Lower leg skin (tissue), 4 donors: ENCODE measurements at regions of chr6 and their contacts with region 1.

Region 1: DNA sequence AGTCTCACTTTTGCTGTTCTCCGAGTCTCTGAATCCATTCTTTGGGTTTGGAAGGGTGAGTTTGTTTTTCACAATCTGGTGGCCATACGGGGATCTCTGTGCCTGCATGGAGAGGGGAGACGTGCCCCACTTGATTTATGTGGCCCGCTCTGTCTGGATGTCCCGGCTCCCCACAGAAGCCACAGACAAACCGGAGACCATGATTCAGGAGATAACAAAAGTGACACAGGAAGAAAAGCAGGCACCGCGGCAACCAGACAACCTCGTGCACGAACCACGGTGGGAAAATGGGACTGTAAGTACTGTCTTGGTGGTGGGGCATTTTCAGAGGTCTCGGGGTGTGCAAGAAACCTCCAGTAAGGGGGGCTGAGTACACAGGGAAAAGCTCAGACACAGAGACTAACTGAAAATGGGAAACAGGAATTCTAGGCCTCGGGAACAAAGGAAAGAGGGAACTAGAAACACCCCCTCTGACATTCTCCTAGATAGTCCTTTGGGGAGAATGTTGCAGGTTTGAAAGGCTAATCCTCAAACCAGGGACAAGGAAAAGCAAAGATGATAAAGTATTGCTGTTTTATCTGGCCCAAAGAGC is 22.1 kb upstream of the ZNF318 start:
- DNase-seq: no peak
- H3K4me3 ChIP-seq: no peak overlapping the region
- CTCF ChIP-seq: no peak
- POLR2A ChIP-seq: no peak

Region 2: GRCh38 chr6:43263314-43264178 is 128.0 kb before region 1 on chr6:
- intact Hi-C with region 1: loop called (anchors 10 kb)
- DNase-seq: peak; percentile 48 to 92
- H3K4me3 ChIP-seq: no peak overlapping the region
- CTCF ChIP-seq: no peak
- POLR2A ChIP-seq: no peak

Region 3: GRCh38 chr6:43547222-43547621 is 155.7 kb after region 1 on chr6:
- intact Hi-C with region 1: no loop called
- DNase-seq: no peak
- H3K4me3 ChIP-seq: no peak overlapping the region
- CTCF ChIP-seq: no peak
- POLR2A ChIP-seq: no peak